Activated CD4-positive, alpha-beta T cell treated with anti-CD3 and anti-CD28 coated beads for 36 hours (primary cell): ENCODE measurements at regions of chr15 and their contacts with region 1.

Region 1: GRCh38 chr15:74768771-74769342 is 13.0 kb upstream of the CSK start:
- DNase-seq: peak; percentile 83
- ATAC-seq: peak; percentile 45
- H3K4me3 Mint-ChIP-seq: no peak overlapping the region
- H3K27ac Mint-ChIP-seq: no peak overlapping the region
- H3K4me1 Mint-ChIP-seq: peaks cover 20% of the 10 kb centered on the region
- H3K27me3 Mint-ChIP-seq: peaks cover 2% of the 10 kb centered on the region

Region 2: DNA sequence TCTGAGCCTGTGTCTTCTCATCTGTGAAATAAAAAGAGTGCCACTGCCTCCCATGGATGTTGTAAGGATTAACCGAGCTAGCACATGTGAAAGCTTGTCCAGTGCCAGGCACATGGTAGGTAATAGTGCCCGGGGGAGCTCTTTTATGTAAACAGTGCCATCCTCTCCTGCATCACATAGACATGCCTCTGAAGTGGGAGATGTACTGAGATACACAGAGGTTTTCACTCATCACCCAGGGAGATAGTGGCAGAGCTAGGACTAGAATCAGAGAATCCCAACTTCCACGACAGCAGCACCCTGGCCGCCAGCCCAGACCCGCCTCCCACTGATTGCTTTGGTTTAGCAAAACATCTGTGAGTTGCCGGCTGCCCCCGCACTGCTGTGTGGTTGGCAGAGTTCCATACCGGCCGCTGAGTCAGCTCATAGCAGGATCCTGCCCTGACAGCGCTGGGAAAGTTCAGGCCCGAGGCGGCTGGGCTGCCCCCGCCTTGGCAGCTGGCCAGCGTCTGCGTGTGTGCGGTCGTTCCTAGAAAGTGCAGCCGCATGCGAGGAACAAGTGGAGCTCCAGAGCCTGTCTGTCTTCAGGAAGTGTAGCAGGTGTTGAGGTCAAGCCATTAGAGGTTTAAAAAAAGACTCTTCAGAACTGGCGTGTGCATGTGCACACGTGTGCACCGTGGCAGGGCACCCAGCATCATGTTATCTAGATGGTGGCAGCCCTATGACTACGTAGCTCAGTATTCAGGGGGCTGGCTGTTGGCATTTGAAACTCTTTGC is 222.8 kb before region 1 on chr15:
- CTCF ChIA-PET with region 1: no interaction called
- POLR2A ChIA-PET with region 1: no interaction called
- intact Hi-C with region 1: no loop called
- DNase-seq: peak; percentile 98
- ATAC-seq: peak; percentile 72
- H3K4me3 Mint-ChIP-seq: peak overlapping the region; percentile 29
- H3K27ac Mint-ChIP-seq: peak overlapping the region; percentile 44
- H3K4me1 Mint-ChIP-seq: peaks cover 62% of the 10 kb centered on the region
- H3K27me3 Mint-ChIP-seq: peaks cover 2% of the 10 kb centered on the region

Region 3: DNA sequence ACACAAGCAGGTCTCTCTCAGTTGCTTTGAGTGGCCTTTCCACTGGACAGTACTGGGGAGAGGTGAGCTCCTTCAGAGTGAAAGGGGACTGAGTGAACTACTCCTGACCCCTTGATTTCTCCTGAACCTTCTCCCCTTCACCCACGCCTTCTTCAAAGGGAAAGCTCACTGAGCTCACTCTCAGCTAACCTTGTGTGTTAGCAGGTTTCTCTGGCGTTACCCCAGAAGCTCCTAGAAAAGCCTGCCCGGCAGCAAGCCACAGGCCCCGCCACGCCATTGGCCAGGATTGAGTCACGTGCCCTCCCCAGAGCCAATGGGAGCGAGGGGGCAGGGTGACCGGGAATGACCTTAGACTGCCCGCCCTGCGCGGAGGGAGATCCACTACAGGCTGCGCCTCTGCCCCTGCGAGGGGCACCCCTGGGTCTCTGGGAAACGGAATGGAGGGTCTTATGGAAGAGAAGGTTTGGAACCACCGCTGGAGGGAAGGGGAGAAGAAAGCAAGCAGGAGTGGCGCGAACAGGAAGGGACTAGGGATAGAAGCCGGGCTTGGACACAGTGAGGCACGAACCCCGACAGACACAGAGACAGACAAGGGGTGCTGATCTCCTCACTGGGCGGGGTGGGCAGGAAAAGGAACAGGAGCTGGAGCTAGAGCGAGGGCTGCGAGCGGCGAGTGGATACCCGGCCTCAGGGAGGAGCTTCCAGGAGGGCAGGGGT is 170.6 kb before region 1 on chr15:
- CTCF ChIA-PET with region 1: no interaction called
- POLR2A ChIA-PET with region 1: no interaction called
- intact Hi-C with region 1: no loop called
- DNase-seq: peak; percentile 94
- ATAC-seq: peak; percentile 99
- H3K4me3 Mint-ChIP-seq: peak overlapping the region; percentile 90
- H3K27ac Mint-ChIP-seq: peak overlapping the region; percentile 99
- H3K4me1 Mint-ChIP-seq: peaks cover 20% of the 10 kb centered on the region
- H3K27me3 Mint-ChIP-seq: no peaks in the 10 kb centered on the region

Region 4: GRCh38 chr15:74620636-74621545 is 148.0 kb before region 1 on chr15:
- CTCF ChIA-PET with region 1: interaction called, 59 read pairs
- POLR2A ChIA-PET with region 1: no interaction called
- intact Hi-C with region 1: loop called in 1 of 2 experiments (anchors 1 kb)
- DNase-seq: peak; percentile 90
- ATAC-seq: peak; percentile 97
- H3K4me3 Mint-ChIP-seq: no peak overlapping the region
- H3K27ac Mint-ChIP-seq: peak overlapping the region; percentile 80
- H3K4me1 Mint-ChIP-seq: peaks cover 46% of the 10 kb centered on the region
- H3K27me3 Mint-ChIP-seq: no peaks in the 10 kb centered on the region

Region 5: GRCh38 chr15:74635228-74635627 is 133.6 kb before region 1 on chr15:
- CTCF ChIA-PET with region 1: interaction called, 458 read pairs
- POLR2A ChIA-PET with region 1: interaction called, 4 read pairs
- intact Hi-C with region 1: loop called (anchors 1 kb)
- DNase-seq: peak; percentile 87
- ATAC-seq: peak; percentile 90
- H3K4me3 Mint-ChIP-seq: no peak overlapping the region
- H3K27ac Mint-ChIP-seq: no peak overlapping the region
- H3K4me1 Mint-ChIP-seq: no peaks in the 10 kb centered on the region
- H3K27me3 Mint-ChIP-seq: no peaks in the 10 kb centered on the region

Region 6: DNA sequence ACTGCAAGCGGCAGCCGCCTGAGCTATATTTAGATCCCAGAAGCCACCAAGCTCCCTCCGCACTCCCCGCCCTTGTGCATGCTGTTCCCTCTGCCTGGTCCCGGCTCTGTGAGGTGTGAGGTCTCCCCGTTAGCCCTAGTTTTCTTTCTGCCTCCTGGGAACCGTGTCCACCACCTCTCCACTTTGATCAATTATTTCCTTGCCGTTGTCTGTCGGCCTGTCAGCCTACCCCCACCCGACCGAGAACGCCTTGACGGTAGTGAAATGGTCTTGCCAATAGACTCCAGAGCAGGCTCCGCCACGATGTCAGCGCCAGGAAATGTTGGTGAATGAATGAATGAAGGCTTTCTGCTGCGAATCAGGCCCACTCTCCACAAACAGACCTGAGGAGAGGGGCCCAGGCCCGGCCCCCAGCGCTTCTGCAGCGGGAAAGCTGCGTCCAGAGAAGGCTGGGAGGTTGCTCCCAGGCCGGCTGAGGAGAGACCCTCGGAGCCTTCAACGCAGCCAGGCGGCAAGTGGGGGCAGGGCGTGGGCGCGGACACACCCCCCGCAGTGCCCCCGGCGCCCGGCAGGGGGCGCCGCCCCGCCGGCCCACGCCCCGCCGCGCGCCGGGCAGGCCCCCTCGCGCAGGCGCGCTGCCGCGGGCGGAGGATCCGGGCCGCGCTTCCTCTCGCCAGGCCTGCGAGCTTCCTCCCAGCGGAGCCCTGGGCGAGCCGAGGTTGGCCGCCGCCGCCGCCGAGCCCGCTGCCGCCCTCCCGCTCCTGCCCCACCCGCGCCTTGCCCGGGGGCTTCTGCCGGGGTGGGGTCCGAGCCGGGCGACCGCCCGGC is 12.8 kb after region 1 on chr15 and contains the start of gene CSK:
- CTCF ChIA-PET with region 1: interaction called, 743 read pairs
- POLR2A ChIA-PET with region 1: interaction called, 4 read pairs
- intact Hi-C with region 1: loop called in 1 of 2 experiments (anchors 1 kb)
- DNase-seq: peak; percentile 84
- ATAC-seq: peak; percentile 27
- H3K4me3 Mint-ChIP-seq: peak within 1 kb of the TSS; percentile 89
- H3K27ac Mint-ChIP-seq: peak within 1 kb of the TSS; percentile 100
- H3K4me1 Mint-ChIP-seq: peaks cover 56% of the 10 kb centered on the region
- H3K27me3 Mint-ChIP-seq: no peaks in the 10 kb centered on the region
- total RNA-seq, gene CSK: 229 to 272 TPM

Region 7: GRCh38 chr15:74799856-74800547 is 31.1 kb after region 1 on chr15:
- CTCF ChIA-PET with region 1: interaction called, 743 read pairs
- POLR2A ChIA-PET with region 1: interaction called, 5 read pairs
- intact Hi-C with region 1: loop called (anchors 1 kb)
- DNase-seq: peak; percentile 93
- ATAC-seq: peak; percentile 87
- H3K4me3 Mint-ChIP-seq: no peak overlapping the region
- H3K27ac Mint-ChIP-seq: peak overlapping the region; percentile 80
- H3K4me1 Mint-ChIP-seq: peaks cover 44% of the 10 kb centered on the region
- H3K27me3 Mint-ChIP-seq: no peaks in the 10 kb centered on the region

Region 8: GRCh38 chr15:74842581-74843444 is 74.0 kb after region 1 on chr15 and contains the start of gene ULK3:
- CTCF ChIA-PET with region 1: interaction called, 15 read pairs
- POLR2A ChIA-PET with region 1: no interaction called
- intact Hi-C with region 1: loop called in 1 of 2 experiments (anchors 2 kb)
- DNase-seq: peak; percentile 97
- ATAC-seq: peak; percentile 85
- H3K4me3 Mint-ChIP-seq: peak within 1 kb of the TSS; percentile 90
- H3K27ac Mint-ChIP-seq: peak within 1 kb of the TSS; percentile 90
- H3K4me1 Mint-ChIP-seq: peaks cover 45% of the 10 kb centered on the region
- H3K27me3 Mint-ChIP-seq: no peaks in the 10 kb centered on the region
- total RNA-seq, gene ULK3: 40.3 to 45.2 TPM